ENCODE measurements at regions of chr9 and their contacts with region 1.

Region 1: DNA sequence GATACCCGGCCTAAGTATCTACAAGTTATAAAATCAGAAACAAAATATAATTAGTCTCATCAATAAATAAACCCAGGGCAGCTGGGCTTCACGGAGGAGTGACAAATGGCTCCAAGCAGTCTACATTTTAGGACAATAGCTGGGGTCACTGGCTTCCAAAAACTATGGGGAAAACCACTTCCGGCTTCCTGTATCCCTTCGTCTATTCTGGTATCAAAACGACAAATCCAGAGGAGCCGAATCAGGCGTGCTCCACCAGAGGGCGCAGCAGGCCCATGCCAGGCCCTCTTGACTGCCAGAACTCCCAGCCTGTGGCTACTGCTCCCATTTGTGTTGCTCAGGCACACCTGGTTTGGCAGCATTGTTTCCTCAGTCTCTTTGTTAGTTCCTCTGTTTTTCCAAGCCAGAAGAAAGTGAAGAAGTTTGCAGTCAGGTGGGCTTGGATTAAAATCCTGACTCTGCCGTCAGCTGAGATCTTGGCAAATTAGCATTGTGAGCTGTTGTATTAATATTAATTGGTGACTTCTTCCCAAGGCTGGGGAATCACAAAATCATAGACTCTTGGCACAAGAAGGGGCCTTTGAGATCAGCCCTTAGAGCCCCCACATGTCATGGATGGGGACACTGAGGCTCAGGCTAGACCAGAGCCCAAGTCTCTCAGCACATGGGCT is 11.6 kb upstream of the RAB14 start:
- DNase-seq: peak; percentile 90
- H3K4me3 Mint-ChIP-seq: no peak overlapping the region
- H3K27ac Mint-ChIP-seq: peak overlapping the region; percentile 54
- H3K4me1 Mint-ChIP-seq: peaks cover 8% of the 10 kb centered on the region
- H3K27me3 Mint-ChIP-seq: no peaks in the 10 kb centered on the region
- CTCF ChIP-seq: peak; percentile 97

Region 2: GRCh38 chr9:121230256-121230655 is 17.0 kb after region 1 on chr9:
- CTCF ChIA-PET with region 1: interaction called, 53 read pairs
- POLR2A ChIA-PET with region 1: interaction called, 6 read pairs
- intact Hi-C with region 1: no loop called
- DNase-seq: no peak
- H3K4me3 Mint-ChIP-seq: no peak overlapping the region
- H3K27ac Mint-ChIP-seq: no peak overlapping the region
- H3K4me1 Mint-ChIP-seq: peaks cover 7% of the 10 kb centered on the region
- H3K27me3 Mint-ChIP-seq: no peaks in the 10 kb centered on the region
- CTCF ChIP-seq: no peak

Region 3: DNA sequence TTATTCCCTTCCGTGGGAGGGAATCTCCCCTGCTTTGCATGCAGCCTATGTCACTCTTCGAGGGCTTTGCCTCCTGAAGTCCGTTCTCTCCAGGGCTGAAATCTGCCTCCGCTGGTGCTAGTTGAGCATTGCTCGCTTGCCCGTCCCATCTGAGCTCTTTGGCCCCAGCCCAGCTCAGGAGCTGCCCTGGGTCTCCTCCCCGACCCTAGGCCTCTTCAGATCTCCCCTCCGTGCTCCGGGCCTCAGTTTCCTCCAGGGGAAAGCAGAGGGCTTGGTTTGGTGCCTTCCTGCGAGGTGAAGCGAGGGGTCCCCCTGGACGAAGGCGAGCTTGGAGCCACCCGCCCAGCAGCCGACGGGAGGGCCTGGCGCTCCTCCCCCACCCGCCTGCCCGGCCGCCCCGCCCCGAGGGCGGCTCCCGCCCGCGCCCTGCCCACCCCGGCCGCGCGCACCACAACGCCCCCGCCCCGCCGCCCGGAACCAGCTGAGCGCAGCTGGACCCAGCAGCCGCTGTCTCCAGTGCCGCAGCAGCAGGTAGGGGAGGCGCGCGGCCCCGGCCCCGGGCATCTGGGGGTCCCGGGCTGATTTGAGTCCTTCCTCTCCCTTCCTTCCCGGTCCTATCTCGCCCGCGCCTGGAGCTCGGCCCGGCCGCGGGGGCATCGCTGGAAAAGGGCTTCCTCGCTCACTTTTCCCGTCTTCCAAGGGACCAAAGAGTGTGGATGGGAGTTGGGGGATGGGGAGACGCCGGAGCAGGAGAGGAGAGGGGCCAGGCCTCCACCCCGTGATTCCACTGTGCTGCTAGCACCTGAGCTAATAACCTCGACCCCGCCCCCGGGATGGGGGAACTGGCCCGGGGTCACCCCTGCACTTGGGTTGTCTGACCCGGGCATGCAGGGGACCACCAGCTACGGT is 54.7 kb after region 1 on chr9 and contains the start of gene GSN:
- CTCF ChIA-PET with region 1: interaction called, 49 read pairs
- POLR2A ChIA-PET with region 1: interaction called, 11 read pairs
- intact Hi-C with region 1: no loop called
- DNase-seq: peak; percentile 49
- H3K4me3 Mint-ChIP-seq: peak within 1 kb of the TSS; percentile 75
- H3K27ac Mint-ChIP-seq: peak within 1 kb of the TSS; percentile 80
- H3K4me1 Mint-ChIP-seq: peaks cover 18% of the 10 kb centered on the region
- H3K27me3 Mint-ChIP-seq: no peaks in the 10 kb centered on the region
- CTCF ChIP-seq: no peak
- total RNA-seq, gene GSN: 21.9 and 24.9 TPM in 2 replicates

Region 4: DNA sequence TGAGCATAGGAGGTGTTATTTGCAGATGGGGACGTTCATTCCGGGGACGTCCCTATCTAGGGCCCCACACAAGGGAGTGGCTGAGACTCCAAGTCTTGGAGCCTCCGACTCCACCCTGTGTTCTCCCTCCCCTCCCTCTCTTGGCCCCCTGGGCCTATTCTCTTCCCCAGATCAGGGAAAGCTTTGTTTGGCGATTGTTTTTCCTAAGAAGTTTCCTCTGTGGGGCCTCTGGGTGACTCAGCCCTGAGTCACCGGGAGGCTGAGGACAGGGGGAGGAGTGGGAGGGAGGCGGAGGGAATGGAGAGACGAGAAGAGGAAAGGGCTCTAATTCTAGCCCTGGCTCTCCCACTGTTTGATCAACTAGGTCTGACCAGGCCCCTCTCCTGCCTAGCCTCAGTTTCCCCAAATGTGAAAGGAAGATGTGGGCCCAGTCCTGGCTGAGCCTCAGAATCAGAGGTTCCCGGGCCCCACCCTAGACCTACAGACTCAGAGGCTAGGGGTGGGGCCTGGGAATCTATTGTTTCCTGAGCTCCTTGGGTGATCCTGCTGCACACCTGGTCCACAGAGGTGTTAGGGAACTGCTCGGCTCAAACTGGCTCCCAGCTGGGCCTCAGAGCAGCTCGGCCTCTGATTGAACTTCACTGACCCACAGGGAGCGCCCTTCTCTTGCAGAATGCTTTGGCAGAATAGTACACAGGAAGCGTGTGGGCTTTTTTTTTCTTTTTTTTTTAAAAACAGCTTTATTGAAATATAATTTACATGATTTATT is 73.9 kb after region 1 on chr9:
- CTCF ChIA-PET with region 1: interaction called, 28 read pairs
- POLR2A ChIA-PET with region 1: interaction called, 3 read pairs
- intact Hi-C with region 1: loop called (anchors 2 kb)
- DNase-seq: peak; percentile 99
- H3K4me3 Mint-ChIP-seq: peak overlapping the region; percentile 32
- H3K27ac Mint-ChIP-seq: peak overlapping the region; percentile 80
- H3K4me1 Mint-ChIP-seq: peaks cover 70% of the 10 kb centered on the region
- H3K27me3 Mint-ChIP-seq: no peaks in the 10 kb centered on the region
- CTCF ChIP-seq: peak; percentile 14

Region 5: GRCh38 chr9:121376214-121376830 is 163.1 kb after region 1 on chr9:
- CTCF ChIA-PET with region 1: interaction called, 43 read pairs
- POLR2A ChIA-PET with region 1: interaction called, 5 read pairs
- intact Hi-C with region 1: loop called (anchors 1 kb)
- DNase-seq: no peak
- H3K4me3 Mint-ChIP-seq: no peak overlapping the region
- H3K27ac Mint-ChIP-seq: no peak overlapping the region
- H3K4me1 Mint-ChIP-seq: peaks cover 28% of the 10 kb centered on the region
- H3K27me3 Mint-ChIP-seq: no peaks in the 10 kb centered on the region
- CTCF ChIP-seq: peak; percentile 45

Region 6: DNA sequence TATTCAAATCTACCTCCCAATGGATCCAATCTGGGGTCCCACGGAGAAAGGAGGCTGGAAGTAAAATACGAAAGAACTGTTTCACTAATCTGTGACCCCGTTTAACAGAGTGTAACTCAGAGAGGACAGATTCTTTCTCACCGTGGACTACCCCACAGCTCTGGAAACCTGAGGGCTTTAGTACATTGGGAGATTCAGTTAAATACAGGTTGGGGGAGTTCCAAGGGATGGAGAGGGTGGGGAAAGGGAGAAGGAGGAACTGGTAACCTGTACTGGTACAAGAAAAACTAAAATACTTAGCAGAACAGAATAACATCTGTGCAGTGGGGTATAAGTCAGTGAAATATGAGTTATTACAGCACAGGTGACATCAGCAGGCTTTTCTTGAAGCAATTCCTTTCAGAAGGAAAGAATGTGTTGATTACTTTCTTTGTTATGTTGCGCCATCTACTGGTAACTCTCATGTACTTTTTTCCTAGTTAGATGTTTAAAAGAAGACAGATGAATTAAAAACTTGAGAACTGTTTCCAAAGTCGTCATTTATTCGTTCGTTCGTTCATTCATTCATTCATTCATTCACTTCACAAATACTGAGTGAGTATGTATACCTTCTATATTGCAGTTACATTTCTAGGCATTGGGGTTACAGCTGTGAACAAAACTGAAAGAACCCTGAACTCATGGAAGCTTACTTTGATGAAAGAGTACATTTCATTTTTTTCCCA is 186.8 kb after region 1 on chr9:
- CTCF ChIA-PET with region 1: interaction called, 125 read pairs
- POLR2A ChIA-PET with region 1: interaction called, 17 read pairs
- intact Hi-C with region 1: loop called (anchors 1 kb)
- DNase-seq: peak; percentile 80
- H3K4me3 Mint-ChIP-seq: no peak overlapping the region
- H3K27ac Mint-ChIP-seq: no peak overlapping the region
- H3K4me1 Mint-ChIP-seq: peaks cover 20% of the 10 kb centered on the region
- H3K27me3 Mint-ChIP-seq: no peaks in the 10 kb centered on the region
- CTCF ChIP-seq: peak; percentile 63

Region 7: DNA sequence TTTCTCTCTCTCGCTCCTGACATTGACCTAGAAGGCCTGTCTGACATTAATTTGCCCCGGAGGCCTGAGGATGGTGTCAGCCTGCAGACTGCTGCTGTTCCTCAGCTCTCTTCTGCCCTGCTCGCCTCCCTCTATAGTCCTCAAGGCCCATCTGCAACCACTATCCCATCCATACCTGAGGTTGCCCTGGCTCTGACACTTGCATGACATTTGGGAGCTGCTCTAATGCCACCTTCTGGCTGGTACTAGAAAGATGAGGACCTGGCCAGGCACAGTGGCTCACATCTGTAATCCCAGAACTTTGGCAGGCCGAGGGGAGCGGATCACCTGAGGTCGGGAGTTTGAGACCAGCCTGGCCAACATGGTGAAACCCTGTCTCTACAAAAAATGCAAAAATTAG is 325.0 kb after region 1 on chr9:
- CTCF ChIA-PET with region 1: interaction called, 4 read pairs
- POLR2A ChIA-PET with region 1: no interaction called
- intact Hi-C with region 1: loop called (anchors 2 kb)
- DNase-seq: peak; percentile 41
- H3K4me3 Mint-ChIP-seq: no peak overlapping the region
- H3K27ac Mint-ChIP-seq: no peak overlapping the region
- H3K4me1 Mint-ChIP-seq: no peaks in the 10 kb centered on the region
- H3K27me3 Mint-ChIP-seq: peaks cover 5% of the 10 kb centered on the region
- CTCF ChIP-seq: peak; percentile 11

Measured in MCF 10A (cell line).